Activated CD8-positive, alpha-beta T cell treated with anti-CD3 and anti-CD28 coated beads, Interleukin-2, amount 10 ng/mL, durations not matched to agents 7 days and 5 days (primary cell): ENCODE measurements at regions of chr1 and their contacts with region 1.

Region 1: GRCh38 chr1:65235867-65236805 is 73.2 kb upstream of the DNAJC6 start:
- DNase-seq: no peak
- ATAC-seq: no peak
- H3K4me3 Mint-ChIP-seq: no peak overlapping the region
- H3K27ac Mint-ChIP-seq: no peak overlapping the region
- H3K4me1 Mint-ChIP-seq: peaks cover 5% of the 10 kb centered on the region
- H3K27me3 Mint-ChIP-seq: peaks cover 16% of the 10 kb centered on the region

Region 2: GRCh38 chr1:65066766-65067490 is 169.2 kb before region 1 on chr1:
- CTCF ChIA-PET with region 1: interaction called, 11 read pairs
- POLR2A ChIA-PET with region 1: no interaction called
- DNase-seq: peak; percentile 70
- ATAC-seq: peak; percentile 70
- H3K4me3 Mint-ChIP-seq: peak overlapping the region; percentile 89
- H3K27ac Mint-ChIP-seq: peak overlapping the region; percentile 72
- H3K4me1 Mint-ChIP-seq: peaks cover 34% of the 10 kb centered on the region
- H3K27me3 Mint-ChIP-seq: no peaks in the 10 kb centered on the region

Region 3: GRCh38 chr1:65459397-65459768 is 223.2 kb after region 1 on chr1:
- CTCF ChIA-PET with region 1: interaction called, 51 read pairs
- POLR2A ChIA-PET with region 1: no interaction called
- DNase-seq: peak; percentile 28
- ATAC-seq: peak; percentile 49
- H3K4me3 Mint-ChIP-seq: no peak overlapping the region
- H3K27ac Mint-ChIP-seq: no peak overlapping the region
- H3K4me1 Mint-ChIP-seq: peaks cover 24% of the 10 kb centered on the region
- H3K27me3 Mint-ChIP-seq: no peaks in the 10 kb centered on the region

Region 4: DNA sequence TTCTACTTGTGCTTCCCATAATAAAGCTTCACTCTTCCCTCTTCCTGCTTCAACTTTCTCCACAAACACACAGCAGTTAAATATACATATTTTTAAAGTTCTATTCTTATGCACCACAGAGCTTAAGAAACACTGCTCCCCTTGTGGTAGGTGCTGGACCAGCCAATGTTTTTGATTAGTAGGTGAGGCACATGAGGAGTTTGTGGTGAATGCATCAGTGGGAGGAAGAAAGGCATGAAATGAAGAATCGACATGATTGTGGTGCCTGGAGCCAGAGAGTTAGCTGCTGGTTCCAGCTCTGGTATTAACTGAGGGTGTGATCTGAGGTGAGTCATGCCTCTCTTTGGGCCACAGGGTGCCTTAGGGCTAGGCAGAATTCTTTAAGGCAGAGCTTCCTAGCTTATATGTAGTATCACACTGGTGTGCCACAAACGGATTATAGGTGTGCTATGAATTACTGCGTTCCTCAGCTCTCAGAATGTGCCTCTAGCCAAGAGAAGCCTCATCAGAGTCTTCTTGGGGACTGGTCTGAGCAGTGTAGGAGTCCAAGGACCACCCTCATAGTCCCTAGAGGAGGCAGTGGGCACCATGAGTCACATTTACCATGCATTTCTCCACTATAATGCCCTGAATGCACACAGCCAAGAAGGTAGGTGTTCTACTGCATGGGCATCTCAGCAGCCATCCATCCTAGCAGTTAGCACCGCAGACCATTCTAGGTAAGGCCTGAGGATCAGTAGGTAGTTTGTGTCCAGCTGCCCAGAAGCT is 1200.4 kb after region 1 on chr1:
- CTCF ChIA-PET with region 1: no interaction called
- POLR2A ChIA-PET with region 1: no interaction called
- DNase-seq: peak; percentile 64
- ATAC-seq: peak; percentile 86
- H3K4me3 Mint-ChIP-seq: no peak overlapping the region
- H3K27ac Mint-ChIP-seq: no peak overlapping the region
- H3K4me1 Mint-ChIP-seq: peaks cover 36% of the 10 kb centered on the region
- H3K27me3 Mint-ChIP-seq: no peaks in the 10 kb centered on the region